ENCODE measurements at regions of chr1 and their contacts with region 1.

Region 1: DNA sequence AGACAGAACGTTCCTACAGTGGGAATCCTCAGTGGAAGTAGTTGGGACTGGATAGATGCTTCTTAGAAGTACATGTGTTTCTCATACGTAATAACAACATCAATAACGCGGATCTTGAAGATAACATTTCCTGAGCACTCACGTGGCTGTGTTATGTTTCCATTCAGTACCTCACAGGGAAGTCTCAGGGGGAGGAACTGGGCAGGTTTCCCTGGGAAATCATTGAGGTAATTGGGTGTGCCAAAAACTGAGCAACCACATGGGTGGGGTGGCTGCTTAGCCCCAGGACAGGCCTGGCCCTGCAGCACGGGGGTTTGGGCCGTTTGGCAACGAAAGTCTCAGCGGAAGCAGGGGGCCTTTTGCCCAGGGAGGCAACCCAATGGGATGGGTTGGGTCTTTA is 133.8 kb downstream of the ZSCAN20 start:
- DNase-seq: no peak

Region 2: DNA sequence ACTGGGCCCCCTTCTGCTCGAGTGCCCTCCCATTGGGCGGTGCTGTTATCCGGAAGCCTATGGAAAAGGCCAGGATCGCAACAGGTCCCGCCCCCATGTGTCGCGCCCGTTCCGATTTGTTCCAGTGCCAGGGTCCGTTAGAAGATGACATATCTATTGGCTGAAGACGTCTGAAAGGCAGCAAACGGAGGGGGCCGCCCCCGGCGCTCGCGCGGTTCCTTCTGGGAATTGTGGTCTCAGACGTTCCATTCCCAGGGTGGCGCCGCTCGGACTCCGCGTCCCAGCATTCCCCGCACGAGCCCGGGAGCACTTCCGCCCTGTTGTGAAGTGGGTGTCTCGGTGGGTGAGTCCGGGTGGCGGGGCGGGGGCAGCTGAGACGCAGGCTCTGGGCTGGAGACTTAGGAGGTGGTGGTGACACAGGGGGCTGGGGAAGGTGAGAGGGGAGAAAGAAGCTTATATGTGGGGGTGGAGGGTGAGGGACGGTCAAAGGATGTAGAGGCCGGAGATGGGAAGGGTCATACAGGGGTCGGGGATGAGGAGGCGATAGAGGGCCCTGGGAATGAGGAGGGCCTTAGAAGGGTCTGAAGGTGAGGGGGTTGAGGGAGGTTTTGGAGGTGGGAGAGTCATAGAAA is 133.8 kb before region 1 on chr1 and contains the start of gene ZSCAN20:
- intact Hi-C with region 1: loop called (anchors 1 kb)
- DNase-seq: peak; percentile 98
- total RNA-seq, gene ZSCAN20: 8.3 TPM

Region 3: DNA sequence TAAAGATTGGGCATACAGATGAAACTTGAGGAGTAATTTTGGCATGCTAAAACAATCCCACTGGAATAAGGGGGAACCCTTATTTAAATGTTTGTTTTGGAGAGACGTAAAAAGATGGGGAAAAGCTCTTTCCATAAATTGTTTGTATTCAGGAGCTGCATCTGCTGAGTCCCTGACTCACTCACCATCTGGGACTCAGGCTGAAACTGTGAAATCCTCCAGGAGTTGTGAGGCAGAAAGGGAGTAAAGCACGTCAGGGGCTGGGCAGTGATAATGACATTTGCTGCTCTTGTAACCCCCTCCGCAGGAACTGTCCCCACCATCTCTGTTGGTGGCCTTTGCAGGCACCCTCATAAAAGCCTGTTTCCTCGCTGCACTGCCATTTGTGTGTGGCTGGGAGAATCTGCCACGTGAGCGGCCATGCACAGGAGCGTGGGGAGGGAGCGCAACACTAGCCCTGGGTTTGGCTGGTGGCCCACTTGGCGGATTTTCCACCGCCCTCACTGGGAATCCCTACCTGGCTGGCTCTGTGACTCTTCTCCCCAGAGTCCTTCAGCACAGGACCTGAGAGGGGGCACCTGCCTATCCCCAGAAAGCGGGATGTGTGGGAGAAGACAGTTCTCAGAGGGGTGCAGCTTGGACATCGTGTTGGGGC is 88.5 kb before region 1 on chr1:
- intact Hi-C with region 1: no loop called
- DNase-seq: no peak

Region 4: DNA sequence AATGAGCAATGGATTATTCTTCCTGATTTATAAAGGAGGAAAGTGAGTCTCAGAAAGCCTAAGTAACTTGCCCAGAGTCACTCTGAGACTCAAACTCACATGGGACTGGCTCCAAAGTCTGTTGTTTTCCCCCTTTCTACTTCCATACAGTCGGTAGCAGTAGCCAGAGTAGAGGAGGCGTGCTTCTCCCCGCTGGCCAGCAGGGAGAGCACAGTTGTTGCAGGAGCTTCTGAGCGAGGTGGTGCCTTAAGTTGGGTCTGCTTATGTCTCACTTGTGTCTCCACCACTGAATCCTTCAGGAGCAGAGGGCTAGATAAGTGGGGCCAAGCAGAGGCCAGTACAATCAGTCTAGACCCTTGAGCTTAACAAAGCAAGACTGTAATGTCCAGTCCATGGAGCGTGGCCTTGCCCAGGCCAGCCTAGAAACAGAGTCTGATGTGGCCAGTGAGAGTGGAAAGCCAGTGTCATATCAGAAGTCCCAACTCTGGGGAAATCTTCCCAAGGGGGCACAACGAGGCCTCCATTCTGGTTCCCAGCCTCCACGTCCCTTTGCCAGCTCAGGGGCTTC is 48.1 kb after region 1 on chr1:
- intact Hi-C with region 1: no loop called
- DNase-seq: no peak

Region 5: DNA sequence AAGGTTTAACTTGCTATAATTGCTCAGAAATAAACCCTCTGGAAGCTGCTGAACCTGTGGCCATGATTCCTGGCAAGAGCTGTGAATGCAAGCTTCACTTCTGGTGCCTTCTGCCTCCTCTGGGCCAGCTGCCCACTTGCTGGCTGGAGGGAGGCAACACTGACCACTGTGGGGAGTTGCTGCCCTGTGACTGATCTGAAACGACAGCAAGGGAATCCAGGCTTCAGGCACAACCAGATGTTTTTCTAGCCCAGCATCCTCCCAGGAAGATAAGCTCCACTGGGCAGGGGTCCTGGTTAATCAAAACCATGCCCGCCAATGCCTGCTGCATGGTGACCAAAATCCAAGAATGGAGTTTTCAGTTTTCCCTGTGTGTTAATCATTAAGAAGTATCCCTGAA is 77.6 kb after region 1 on chr1:
- intact Hi-C with region 1: no loop called
- DNase-seq: no peak